K562 (cell line): ENCODE measurements at regions of chr6 and their contacts with region 1.

Region 1: GRCh38 chr6:111259089-111259831 is 172.0 kb downstream of the SLC16A10 start:
- DNase-seq: peak; percentile 97 to 100 (median 97)
- ATAC-seq: peak; percentile 92
- H3K4me3 ChIP-seq: peak overlapping the region; percentile 76
- H3K27ac ChIP-seq: peak overlapping the region; percentile 82
- H3K4me1 ChIP-seq: peaks cover 15 to 16% of the 10 kb centered on the region in 2 experiments; a peak in 4 of 5 replicates
- H3K27me3 ChIP-seq: no peaks in the 10 kb centered on the region
- CTCF ChIP-seq: peak; percentile 93 to 99 (median 97)
- EP300 ChIP-seq: peak; percentile 73
- POLR2A ChIP-seq: peak; percentile 84
- RAD21 ChIP-seq: peak; percentile 98

Region 2: DNA sequence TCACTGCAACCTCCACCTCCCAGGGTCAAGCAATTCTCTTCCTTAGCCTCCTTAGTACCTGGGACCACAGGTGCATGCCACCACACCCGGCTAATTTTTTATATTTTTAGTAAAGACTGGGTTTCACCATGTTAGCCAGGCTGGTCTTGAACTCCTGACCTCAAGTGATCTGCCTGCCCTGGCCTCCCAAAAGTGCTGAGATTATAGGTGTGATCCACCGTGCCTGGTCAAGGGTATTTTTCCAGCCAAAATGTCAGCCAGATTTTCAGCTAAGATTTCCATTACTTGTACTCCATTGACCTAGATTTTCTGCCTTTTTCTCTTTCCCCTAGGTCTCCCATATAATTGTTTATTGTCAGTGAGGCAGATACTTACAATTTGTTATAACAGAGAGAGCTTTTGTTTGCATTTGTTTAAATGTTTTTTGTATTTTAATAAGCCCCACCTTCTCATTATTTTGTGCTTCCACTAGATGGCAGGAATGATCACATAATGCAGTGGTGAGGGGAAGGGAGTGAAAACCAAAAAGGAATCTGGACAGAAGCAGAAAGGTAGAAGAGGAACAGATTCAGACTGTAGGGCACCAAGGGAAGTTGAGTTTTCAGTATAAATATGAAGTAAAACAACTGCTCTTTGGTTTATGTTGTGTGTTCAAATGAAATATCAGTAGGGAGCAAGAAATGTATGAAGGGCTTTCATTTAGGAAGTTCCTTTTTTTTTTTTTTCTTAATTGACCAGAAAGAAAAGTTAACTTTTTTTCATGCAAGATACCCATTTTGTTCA is 247.7 kb before region 1 on chr6:
- CTCF ChIA-PET with region 1: interaction called, 9 read pairs
- POLR2A ChIA-PET with region 1: no interaction called
- in situ Hi-C with region 1: no loop called
- intact Hi-C with region 1: loop called (anchors 5 kb)
- DNase-seq: peak in 3 of 4 experiments; percentile 27 to 40 (median 33)
- ATAC-seq: peak; percentile 86
- H3K4me3 ChIP-seq: no peak overlapping the region
- H3K27ac ChIP-seq: no peak overlapping the region
- H3K4me1 ChIP-seq: no peaks in the 10 kb centered on the region
- H3K27me3 ChIP-seq: no peaks in the 10 kb centered on the region
- CTCF ChIP-seq: peak; percentile 36 to 74 (median 52); a peak in 5 of 6 replicates
- EP300 ChIP-seq: no peak
- POLR2A ChIP-seq: no peak
- RAD21 ChIP-seq: peak; percentile 68 to 73

Region 3: DNA sequence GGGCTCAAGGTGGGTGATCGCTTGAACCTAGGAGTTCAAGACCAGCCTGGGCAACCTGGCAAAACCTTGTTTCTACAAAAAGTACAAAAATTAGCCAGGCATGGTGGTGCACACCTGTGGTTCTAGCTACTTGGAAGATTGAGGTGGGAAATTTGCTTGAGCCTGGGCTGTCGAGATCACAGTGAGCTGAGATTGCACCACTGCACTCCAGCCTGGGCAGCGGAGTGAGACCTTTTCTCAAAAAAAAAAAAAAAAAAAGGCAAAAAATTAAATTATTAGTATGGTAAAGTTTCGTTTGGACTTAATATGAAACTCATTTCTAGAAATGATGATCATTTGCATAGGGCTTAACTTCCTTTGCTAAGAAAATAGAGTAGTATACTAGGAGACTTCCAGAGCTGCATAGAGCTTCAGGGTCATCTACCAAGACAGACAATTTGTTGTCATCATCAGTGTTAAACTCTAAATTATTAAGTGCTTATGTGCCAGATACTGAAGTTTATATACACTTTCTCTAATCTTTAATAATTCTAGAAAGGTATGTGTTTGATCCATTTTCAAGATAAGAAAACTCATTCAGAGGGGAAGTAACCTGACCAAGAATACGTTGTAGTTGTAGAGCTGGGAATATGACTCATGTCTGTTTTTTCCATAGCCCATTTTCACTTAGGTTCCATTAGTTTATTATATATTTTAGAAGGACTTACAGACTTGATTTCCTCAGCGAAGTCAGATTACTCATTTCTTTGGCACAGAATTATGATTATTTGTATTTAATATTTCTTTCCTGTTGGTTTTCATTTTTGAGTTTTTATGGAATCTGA is 87.5 kb before region 1 on chr6:
- CTCF ChIA-PET with region 1: no interaction called
- POLR2A ChIA-PET with region 1: no interaction called
- in situ Hi-C with region 1: no loop called
- intact Hi-C with region 1: no loop called
- DNase-seq: no peak
- ATAC-seq: no peak
- H3K4me3 ChIP-seq: no peak overlapping the region
- H3K27ac ChIP-seq: no peak overlapping the region
- H3K4me1 ChIP-seq: no peaks in the 10 kb centered on the region
- H3K27me3 ChIP-seq: peaks cover 4 to 6% of the 10 kb centered on the region in 2 experiments; a peak in 4 of 5 replicates
- CTCF ChIP-seq: no peak
- EP300 ChIP-seq: no peak
- POLR2A ChIP-seq: no peak
- RAD21 ChIP-seq: no peak

Region 4: GRCh38 chr6:111478749-111479148 is 219.5 kb after region 1 on chr6:
- CTCF ChIA-PET with region 1: interaction called, 4 read pairs
- POLR2A ChIA-PET with region 1: interaction called, 19 read pairs
- in situ Hi-C with region 1: loop called (anchors 5 kb)
- intact Hi-C with region 1: loop called (anchors 1 kb)
- DNase-seq: peak in 2 of 4 experiments; percentile 49 to 64
- ATAC-seq: peak; percentile 64
- H3K4me3 ChIP-seq: no peak overlapping the region
- H3K27ac ChIP-seq: peak overlapping the region; percentile 8; the same call in 1 of the 3 replicates
- H3K4me1 ChIP-seq: peaks cover 9 to 21% of the 10 kb centered on the region in 2 experiments; a peak in 4 of 5 replicates
- H3K27me3 ChIP-seq: no peaks in the 10 kb centered on the region
- CTCF ChIP-seq: peak; percentile 36 to 76 (median 43); a peak in 5 of 6 replicates
- EP300 ChIP-seq: no peak
- POLR2A ChIP-seq: no peak
- RAD21 ChIP-seq: peak; percentile 78 to 85

Region 5: GRCh38 chr6:111580826-111581505 is 321.7 kb after region 1 on chr6:
- CTCF ChIA-PET with region 1: interaction called, 4 read pairs
- POLR2A ChIA-PET with region 1: interaction called, 4 read pairs
- in situ Hi-C with region 1: no loop called
- intact Hi-C with region 1: loop called (anchors 2 kb)
- DNase-seq: no peak
- ATAC-seq: peak; percentile 82
- H3K4me3 ChIP-seq: no peak overlapping the region
- H3K27ac ChIP-seq: no peak overlapping the region
- H3K4me1 ChIP-seq: peaks cover 0 to 10% of the 10 kb centered on the region in 2 experiments; a peak in 2 of 5 replicates
- H3K27me3 ChIP-seq: no peaks in the 10 kb centered on the region
- CTCF ChIP-seq: peak; percentile 29 to 78 (median 64); a peak in 4 of 6 replicates
- EP300 ChIP-seq: no peak
- POLR2A ChIP-seq: no peak
- RAD21 ChIP-seq: peak; percentile 33 to 66; a peak in 3 of 4 replicates

Region 6: GRCh38 chr6:112043032-112044007 is 784.1 kb after region 1 on chr6:
- CTCF ChIA-PET with region 1: no interaction called
- POLR2A ChIA-PET with region 1: no interaction called
- in situ Hi-C with region 1: no loop called
- intact Hi-C with region 1: loop called (anchors 1 kb)
- DNase-seq: peak; percentile 87 to 93 (median 92)
- ATAC-seq: peak; percentile 97
- H3K4me3 ChIP-seq: peak overlapping the region; percentile 49
- H3K27ac ChIP-seq: peak overlapping the region; percentile 26
- H3K4me1 ChIP-seq: peaks cover 0 to 5% of the 10 kb centered on the region in 2 experiments; a peak in 1 of 5 replicates
- H3K27me3 ChIP-seq: peaks cover 5 to 15% of the 10 kb centered on the region in 2 experiments; a peak in 4 of 5 replicates
- CTCF ChIP-seq: peak; percentile 92 to 96 (median 95)
- EP300 ChIP-seq: peak; percentile 56
- POLR2A ChIP-seq: no peak; the same call in 1 of the 2 replicates
- RAD21 ChIP-seq: peak; percentile 86 to 89